Dorsolateral prefrontal cortex (tissue), 120 donors: ENCODE measurements at regions of chr17 and their contacts with region 1.

Region 1: DNA sequence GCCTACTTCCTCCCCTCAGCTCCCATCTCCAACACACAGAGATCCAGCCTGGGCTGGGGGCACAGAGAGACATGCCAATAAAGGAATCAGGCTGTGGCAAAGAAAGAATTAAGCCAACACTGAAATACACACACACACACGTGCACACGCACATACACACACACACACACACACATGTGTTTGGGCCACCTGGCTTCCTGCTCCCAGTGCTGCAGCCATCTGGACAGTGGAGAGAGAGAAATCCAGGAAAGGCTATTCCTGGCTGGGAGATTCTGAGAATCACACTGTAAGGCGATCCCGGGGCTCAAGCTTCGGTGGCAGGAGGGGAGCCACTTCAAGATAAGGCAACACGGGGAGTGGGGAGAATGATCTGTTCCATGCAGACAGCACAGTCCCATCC is 72.4 kb downstream of the NOG start:
- DNase-seq: no peak
- H3K4me3 ChIP-seq: no peak overlapping the region
- H3K27ac ChIP-seq: no peak overlapping the region
- H3K27me3 ChIP-seq: peaks cover 0 to 23% (median 0%) of the 10 kb centered on the region in 45 donors
- CTCF ChIP-seq: no peak

Region 2: DNA sequence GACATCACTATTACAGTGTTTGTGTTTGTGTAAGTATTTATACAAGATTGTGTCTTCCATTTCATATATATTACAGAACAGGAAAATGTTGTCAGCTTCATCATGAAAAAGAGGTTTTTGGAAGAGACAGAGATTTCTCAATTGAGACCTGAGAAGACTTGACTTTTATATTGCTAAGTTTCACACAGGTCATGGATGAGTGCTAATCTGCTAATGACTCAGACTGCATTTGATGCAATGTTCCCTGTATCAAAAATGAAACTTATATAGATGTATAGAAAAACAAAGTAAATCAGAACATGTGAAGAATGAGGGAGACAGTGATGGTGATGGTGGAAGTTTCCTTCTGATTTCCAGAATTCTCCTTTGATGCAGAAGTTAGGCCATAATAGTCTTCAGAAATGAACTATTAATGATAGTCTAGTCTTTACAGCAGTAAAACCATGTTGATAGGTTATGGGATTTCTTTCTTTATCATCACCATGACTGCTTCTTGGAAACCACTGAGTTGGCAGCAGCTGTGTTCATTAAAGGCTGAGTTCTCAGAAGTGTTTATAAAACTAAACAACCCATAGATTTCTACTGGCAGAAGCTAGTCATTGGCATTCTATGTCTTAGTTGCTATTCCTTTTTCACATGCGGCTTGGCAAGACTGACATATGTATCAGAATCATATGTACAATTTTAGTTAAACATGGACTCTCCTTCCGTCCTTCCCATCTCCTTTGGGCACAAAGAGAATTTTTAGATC is 858.9 kb before region 1 on chr17:
- intact Hi-C with region 1: loop called in 1 of 2 experiments (anchors 5 kb)
- DNase-seq: no peak
- H3K4me3 ChIP-seq: no peak overlapping the region
- H3K27ac ChIP-seq: no peak overlapping the region
- H3K27me3 ChIP-seq: no peaks in the 10 kb centered on the region
- CTCF ChIP-seq: no peak

Region 3: GRCh38 chr17:56629531-56630075 is 36.3 kb before region 1 on chr17:
- intact Hi-C with region 1: no loop called
- DNase-seq: peak in 1 of 10 donors; percentile 12
- H3K4me3 ChIP-seq: no peak overlapping the region
- H3K27ac ChIP-seq: no peak overlapping the region
- H3K27me3 ChIP-seq: peaks cover 0 to 28% (median 0%) of the 10 kb centered on the region in 45 donors
- CTCF ChIP-seq: peak in 6 of 56 donors; percentile 12 to 40 (median 16)